ENCODE measurements at regions of chr10 and their contacts with region 1.

Region 1: GRCh38 chr10:987870-988666 is at the start of gene GTPBP4:
- DNase-seq: peak; percentile 95 to 99
- ATAC-seq: peak; percentile 95 to 98 (median 98)
- H3K4me3 ChIP-seq: peak within 1 kb of the TSS; percentile 68
- H3K4me3 Mint-ChIP-seq: peak within 1 kb of the TSS; percentile 98
- H3K27ac ChIP-seq: peak within 1 kb of the TSS; percentile 78
- H3K27ac Mint-ChIP-seq: peak within 1 kb of the TSS; percentile 90 to 97
- H3K4me1 ChIP-seq: peaks cover 21% of the 10 kb centered on the region
- H3K4me1 Mint-ChIP-seq: peaks cover 38 to 39% of the 10 kb centered on the region in 2 donors
- H3K27me3 ChIP-seq: no peaks in the 10 kb centered on the region
- H3K27me3 Mint-ChIP-seq: no peaks in the 10 kb centered on the region
- CTCF ChIP-seq: peak; percentile 12
- total RNA-seq, gene GTPBP4: 53.9 to 99.6 (median 72.5) TPM

Region 2: DNA sequence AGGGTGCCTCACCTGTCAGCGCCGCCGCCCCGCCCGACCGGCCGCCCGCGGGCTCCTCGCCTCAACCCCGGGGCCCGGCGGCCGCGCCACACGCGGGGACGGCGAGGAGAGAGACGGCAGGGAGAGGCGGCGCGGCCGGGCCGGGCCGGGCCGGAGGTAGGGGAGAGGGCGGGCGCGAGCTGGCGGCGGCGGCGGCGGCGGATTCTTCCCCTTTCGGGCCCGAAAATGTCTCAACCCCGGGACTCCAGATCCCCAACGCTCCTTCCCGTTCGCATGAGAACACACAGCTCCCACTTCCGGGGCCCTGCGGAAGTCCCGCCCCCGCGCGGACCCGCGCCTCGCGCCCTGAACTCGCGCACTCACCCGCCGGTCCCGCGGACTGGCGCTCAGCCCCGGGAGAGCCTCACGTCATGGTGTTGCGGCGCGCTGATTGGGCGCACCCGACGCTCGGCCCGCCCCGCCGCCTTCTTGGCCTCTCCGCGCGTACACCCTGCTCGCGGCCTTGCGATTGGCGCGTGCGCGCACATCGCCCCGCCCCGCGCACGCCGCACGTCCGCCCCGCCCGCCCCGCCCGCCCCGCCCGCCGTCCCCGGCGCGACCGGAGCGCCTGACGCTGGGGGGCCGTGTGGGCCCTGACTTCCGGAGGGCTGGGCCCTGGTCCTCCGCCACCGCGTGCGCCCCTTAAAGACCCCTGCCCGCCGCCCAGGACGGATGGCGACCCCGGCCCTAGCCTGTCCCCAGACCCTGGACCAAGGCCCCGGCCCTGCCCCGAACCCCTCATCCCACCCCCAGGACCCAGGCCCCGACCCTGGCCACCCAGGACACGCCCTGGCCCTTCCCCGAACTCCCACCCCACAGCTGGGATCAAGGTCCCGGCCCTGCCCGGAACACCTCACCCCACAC is 56.4 kb before region 1 on chr10 and contains the start of gene LARP4B:
- intact Hi-C with region 1: loop called (anchors 2 kb)
- DNase-seq: peak; percentile 98
- ATAC-seq: peak; percentile 95 to 100 (median 97)
- H3K4me3 ChIP-seq: peak within 1 kb of the TSS; percentile 63
- H3K4me3 Mint-ChIP-seq: peak within 1 kb of the TSS; percentile 95
- H3K27ac ChIP-seq: peak within 1 kb of the TSS; percentile 96
- H3K27ac Mint-ChIP-seq: peak within 1 kb of the TSS; percentile 91 to 97
- H3K4me1 ChIP-seq: peaks cover 17% of the 10 kb centered on the region
- H3K4me1 Mint-ChIP-seq: peaks cover 24 to 40% of the 10 kb centered on the region in 2 donors
- H3K27me3 ChIP-seq: no peaks in the 10 kb centered on the region
- H3K27me3 Mint-ChIP-seq: no peaks in the 10 kb centered on the region
- CTCF ChIP-seq: no peak
- total RNA-seq, gene LARP4B: 75.5 to 95.4 (median 90.2) TPM

Region 3: DNA sequence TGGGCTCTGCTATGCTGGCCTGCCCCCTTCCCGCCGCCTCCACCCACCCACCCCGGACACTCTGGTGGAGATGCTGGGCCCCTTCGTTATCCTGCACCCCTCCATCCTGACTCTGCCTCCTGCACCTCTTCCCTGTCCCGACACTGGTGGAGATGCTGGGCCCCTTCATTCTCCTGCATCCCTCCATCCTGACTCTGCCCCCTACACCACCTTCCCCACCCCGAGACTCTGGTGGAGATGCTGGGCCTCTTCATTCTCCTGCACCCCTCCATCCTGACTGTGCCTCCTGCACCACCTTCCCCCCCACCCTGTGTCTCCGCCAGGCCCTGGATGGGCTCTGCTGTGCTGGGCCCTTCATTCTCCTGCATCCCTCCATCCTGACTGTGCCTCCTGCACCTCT is 22.6 kb after region 1 on chr10:
- intact Hi-C with region 1: loop called (anchors 1 kb)
- DNase-seq: no peak
- ATAC-seq: no peak
- H3K4me3 ChIP-seq: no peak overlapping the region
- H3K4me3 Mint-ChIP-seq: no peak overlapping the region
- H3K27ac ChIP-seq: no peak overlapping the region
- H3K27ac Mint-ChIP-seq: peak overlapping the region in 1 of 2 donors; percentile 67
- H3K4me1 ChIP-seq: no peaks in the 10 kb centered on the region
- H3K4me1 Mint-ChIP-seq: peaks cover 0 to 39% of the 10 kb centered on the region in 2 donors
- H3K27me3 ChIP-seq: no peaks in the 10 kb centered on the region
- H3K27me3 Mint-ChIP-seq: no peaks in the 10 kb centered on the region
- CTCF ChIP-seq: no peak

Region 4: DNA sequence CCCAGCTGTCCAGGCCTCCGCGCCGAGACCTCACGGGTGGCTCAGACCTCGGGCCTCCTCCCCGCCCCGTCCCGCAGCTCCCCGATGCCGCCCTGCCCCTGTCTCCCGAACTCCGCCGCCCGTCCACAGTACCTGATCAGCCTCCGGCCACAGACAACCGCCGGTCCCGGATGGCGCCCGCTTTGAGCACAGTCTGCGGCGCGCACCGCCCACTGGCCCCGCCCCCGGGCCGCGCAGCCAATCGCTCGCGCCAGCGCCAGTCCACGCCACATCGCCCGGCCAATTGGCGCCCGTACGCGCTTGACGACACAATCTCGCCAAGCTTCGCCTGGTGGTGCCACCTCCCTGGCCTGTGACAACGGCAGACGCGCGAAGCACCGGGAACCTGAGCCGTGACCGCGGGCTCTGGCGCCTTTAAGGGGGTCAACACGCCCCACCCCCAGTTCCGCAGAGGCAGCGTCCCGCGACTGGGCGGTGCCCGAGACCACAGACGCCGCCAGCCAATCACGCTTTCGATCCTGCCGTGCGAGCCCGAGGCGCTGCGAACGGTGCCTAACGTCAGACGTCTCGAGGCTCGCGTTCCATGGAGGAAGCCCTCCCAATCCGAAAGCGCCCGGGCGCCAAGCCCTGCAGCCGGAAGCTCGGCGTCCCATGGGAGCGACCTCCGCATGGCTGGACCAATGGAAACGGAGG is 60.8 kb after region 1 on chr10 and contains the start of gene IDI1:
- intact Hi-C with region 1: loop called (anchors 2 kb)
- DNase-seq: peak; percentile 98
- ATAC-seq: peak; percentile 77 to 93 (median 81)
- H3K4me3 ChIP-seq: peak within 1 kb of the TSS; percentile 93
- H3K4me3 Mint-ChIP-seq: peak within 1 kb of the TSS; percentile 95
- H3K27ac ChIP-seq: peak within 1 kb of the TSS; percentile 100
- H3K27ac Mint-ChIP-seq: peak within 1 kb of the TSS; percentile 98 to 99
- H3K4me1 ChIP-seq: peaks cover 37% of the 10 kb centered on the region
- H3K4me1 Mint-ChIP-seq: peaks cover 56 to 78% of the 10 kb centered on the region in 2 donors
- H3K27me3 ChIP-seq: no peaks in the 10 kb centered on the region
- H3K27me3 Mint-ChIP-seq: no peaks in the 10 kb centered on the region
- CTCF ChIP-seq: no peak
- total RNA-seq, gene IDI1: 156 to 229 (median 163) TPM

Region 5: GRCh38 chr10:1061930-1062774 is 74.1 kb after region 1 on chr10:
- intact Hi-C with region 1: loop called (anchors 2 kb)
- DNase-seq: peak in 1 of 2 donors; percentile 28
- ATAC-seq: no peak
- H3K4me3 ChIP-seq: no peak overlapping the region
- H3K4me3 Mint-ChIP-seq: peak overlapping the region; percentile 76
- H3K27ac ChIP-seq: peak overlapping the region; percentile 74
- H3K27ac Mint-ChIP-seq: peak overlapping the region; percentile 88 to 89
- H3K4me1 ChIP-seq: peaks cover 69% of the 10 kb centered on the region
- H3K4me1 Mint-ChIP-seq: peaks cover 89 to 90% of the 10 kb centered on the region in 2 donors
- H3K27me3 ChIP-seq: no peaks in the 10 kb centered on the region
- H3K27me3 Mint-ChIP-seq: no peaks in the 10 kb centered on the region
- CTCF ChIP-seq: no peak